ENCODE measurements at regions of chr3 and their contacts with region 1.

Region 1: GRCh38 chr3:53525765-53526703 is 31.6 kb downstream of the CACNA1D start:
- DNase-seq: peak; percentile 91
- H3K4me3 ChIP-seq: no peak overlapping the region
- H3K27ac ChIP-seq: peak overlapping the region; percentile 30 to 84 (median 80)
- H3K4me1 ChIP-seq: peaks cover 0 to 41% (median 39%) of the 10 kb centered on the region in 4 donors
- H3K27me3 ChIP-seq: no peaks in the 10 kb centered on the region
- CTCF ChIP-seq: no peak
- EP300 ChIP-seq: peak in 3 of 4 donors; percentile 47 to 72 (median 48)
- POLR2A ChIP-seq: no peak

Region 2: GRCh38 chr3:53493963-53494791 is 31.9 kb before region 1 on chr3 and contains the start of gene CACNA1D:
- intact Hi-C with region 1: loop called (anchors 2 kb)
- DNase-seq: no peak
- H3K4me3 ChIP-seq: peak within 1 kb of the TSS; percentile 47 to 64 (median 60)
- H3K27ac ChIP-seq: peak within 1 kb of the TSS in 3 of 4 donors; percentile 53 to 66 (median 65)
- H3K4me1 ChIP-seq: peaks cover 0 to 52% (median 48%) of the 10 kb centered on the region in 4 donors
- H3K27me3 ChIP-seq: peaks cover 0 to 12% (median 0%) of the 10 kb centered on the region in 3 donors
- CTCF ChIP-seq: no peak
- EP300 ChIP-seq: no peak
- POLR2A ChIP-seq: no peak
- total RNA-seq, gene CACNA1D: 4.8 to 9.7 (median 5.4) TPM

Region 3: GRCh38 chr3:53941956-53942355 is 415.9 kb after region 1 on chr3:
- intact Hi-C with region 1: no loop called
- DNase-seq: no peak
- H3K4me3 ChIP-seq: no peak overlapping the region
- H3K27ac ChIP-seq: no peak overlapping the region
- H3K4me1 ChIP-seq: peaks cover 0 to 3% (median 0%) of the 10 kb centered on the region in 4 donors
- H3K27me3 ChIP-seq: no peaks in the 10 kb centered on the region
- CTCF ChIP-seq: no peak
- EP300 ChIP-seq: no peak
- POLR2A ChIP-seq: no peak

Measured in sigmoid colon (tissue), 7 donors.